GM12878 (cell line): ENCODE measurements at regions of chr17 and their contacts with region 1.

Region 1: GRCh38 chr17:53896047-53896446 is 73.3 kb downstream of the KIF2B start:
- DNase-seq: no peak
- ATAC-seq: no peak
- H3K4me3 ChIP-seq: no peak overlapping the region
- H3K27ac ChIP-seq: no peak overlapping the region
- H3K4me1 ChIP-seq: no peaks in the 10 kb centered on the region
- H3K27me3 ChIP-seq: no peaks in the 10 kb centered on the region
- CTCF ChIP-seq: no peak
- EP300 ChIP-seq: no peak
- POLR2A ChIP-seq: no peak
- RAD21 ChIP-seq: no peak

Region 2: GRCh38 chr17:53765609-53766008 is 130.4 kb before region 1 on chr17:
- CTCF ChIA-PET with region 1: no interaction called
- POLR2A ChIA-PET with region 1: no interaction called
- RAD21 ChIA-PET with region 1: no interaction called
- SMC1A ChIA-PET with region 1: no interaction called
- in situ Hi-C with region 1: no loop called
- intact Hi-C with region 1: no loop called
- DNase-seq: no peak
- ATAC-seq: no peak
- H3K4me3 ChIP-seq: no peak overlapping the region
- H3K27ac ChIP-seq: no peak overlapping the region
- H3K4me1 ChIP-seq: no peaks in the 10 kb centered on the region
- H3K27me3 ChIP-seq: no peaks in the 10 kb centered on the region
- CTCF ChIP-seq: no peak
- EP300 ChIP-seq: no peak
- POLR2A ChIP-seq: no peak
- RAD21 ChIP-seq: no peak

Region 3: GRCh38 chr17:53837131-53837530 is 58.9 kb before region 1 on chr17:
- CTCF ChIA-PET with region 1: no interaction called
- POLR2A ChIA-PET with region 1: no interaction called
- RAD21 ChIA-PET with region 1: no interaction called
- SMC1A ChIA-PET with region 1: no interaction called
- in situ Hi-C with region 1: no loop called
- intact Hi-C with region 1: loop called (anchors 10 kb)
- DNase-seq: no peak
- ATAC-seq: no peak
- H3K4me3 ChIP-seq: no peak overlapping the region
- H3K27ac ChIP-seq: no peak overlapping the region
- H3K4me1 ChIP-seq: no peaks in the 10 kb centered on the region
- H3K27me3 ChIP-seq: no peaks in the 10 kb centered on the region
- CTCF ChIP-seq: no peak
- EP300 ChIP-seq: no peak
- POLR2A ChIP-seq: no peak
- RAD21 ChIP-seq: no peak

Region 4: GRCh38 chr17:53950207-53950857 is 54.3 kb after region 1 on chr17:
- CTCF ChIA-PET with region 1: no interaction called
- POLR2A ChIA-PET with region 1: no interaction called
- RAD21 ChIA-PET with region 1: no interaction called
- SMC1A ChIA-PET with region 1: no interaction called
- in situ Hi-C with region 1: no loop called
- intact Hi-C with region 1: no loop called
- DNase-seq: no peak
- ATAC-seq: no peak
- H3K4me3 ChIP-seq: no peak overlapping the region
- H3K27ac ChIP-seq: no peak overlapping the region
- H3K4me1 ChIP-seq: no peaks in the 10 kb centered on the region
- H3K27me3 ChIP-seq: no peaks in the 10 kb centered on the region
- CTCF ChIP-seq: no peak
- EP300 ChIP-seq: no peak
- POLR2A ChIP-seq: no peak
- RAD21 ChIP-seq: no peak